IMR-90 (cell line): ENCODE measurements at regions of chr10 and their contacts with region 1.

Region 1: DNA sequence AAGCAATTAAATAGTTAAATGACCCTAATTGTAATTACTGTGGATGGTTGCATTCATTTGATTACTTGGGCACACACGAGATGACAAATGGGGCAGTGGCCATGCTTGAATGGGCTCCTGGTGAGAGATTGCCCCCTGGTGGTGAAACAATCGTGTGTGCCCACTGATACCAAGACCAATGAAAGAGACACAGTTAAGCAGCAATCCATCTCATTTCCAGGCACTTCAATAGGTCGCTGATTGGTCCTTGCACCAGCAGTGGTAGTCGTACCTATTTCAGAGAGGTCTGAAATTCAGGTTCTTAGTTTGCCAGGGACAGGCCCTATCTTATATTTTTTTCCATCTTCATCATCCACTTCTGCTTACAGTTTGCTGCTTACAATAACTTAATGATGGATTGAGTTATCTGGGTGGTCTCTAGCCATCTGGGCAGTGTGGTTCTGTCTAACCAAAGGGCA is 8.3 kb downstream of the PCBD1 start:
- DNase-seq: peak; percentile 79
- ATAC-seq: peak; percentile 94
- H3K4me3 ChIP-seq: no peak overlapping the region
- H3K27ac ChIP-seq: no peak overlapping the region
- H3K4me1 ChIP-seq: no peaks in the 10 kb centered on the region
- H3K27me3 ChIP-seq: no peaks in the 10 kb centered on the region
- CTCF ChIP-seq: peak; percentile 93
- POLR2A ChIP-seq: 0 out of 2 replicates have a peak, but pooled peaks have one; percentile 35
- RAD21 ChIP-seq: peak; percentile 97

Region 2: GRCh38 chr10:70461215-70461986 is 418.7 kb before region 1 on chr10:
- CTCF ChIA-PET with region 1: no interaction called
- POLR2A ChIA-PET with region 1: no interaction called
- dilution Hi-C with region 1: no loop called
- in situ Hi-C with region 1: no loop called
- intact Hi-C with region 1: loop called (anchors 5 kb)
- DNase-seq: peak; percentile 50
- ATAC-seq: peak; percentile 82
- H3K4me3 ChIP-seq: no peak overlapping the region
- H3K27ac ChIP-seq: no peak overlapping the region
- H3K4me1 ChIP-seq: peaks cover 2% of the 10 kb centered on the region; the same call in 1 of the 2 replicates
- H3K27me3 ChIP-seq: peaks cover 24% of the 10 kb centered on the region
- CTCF ChIP-seq: peak; percentile 87
- POLR2A ChIP-seq: no peak
- RAD21 ChIP-seq: peak; percentile 91

Region 3: DNA sequence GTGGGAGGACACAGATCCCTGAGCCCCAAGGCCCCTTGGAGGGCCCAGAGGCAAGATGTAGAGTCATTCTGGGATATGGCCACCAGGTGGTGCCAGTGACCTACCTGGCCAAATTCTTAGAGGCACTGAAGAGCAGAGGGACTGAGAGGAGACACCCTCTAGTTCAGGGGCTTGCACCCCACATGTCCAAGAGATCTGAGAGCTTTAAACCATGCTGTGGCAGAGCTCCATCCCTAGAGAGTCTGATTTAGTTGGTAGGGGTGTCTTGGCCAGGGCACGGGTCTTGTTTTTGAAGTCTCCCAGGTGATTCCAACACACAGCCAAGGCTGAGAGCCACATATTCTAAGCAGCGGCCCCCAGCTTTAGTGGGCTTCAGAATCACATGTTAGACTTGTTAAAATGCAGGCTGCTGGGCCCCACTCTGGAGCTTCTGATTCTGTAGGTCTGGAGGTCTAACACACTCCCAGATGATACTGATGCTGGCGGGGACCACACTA is 330.1 kb before region 1 on chr10:
- CTCF ChIA-PET with region 1: interaction called, 3 read pairs
- POLR2A ChIA-PET with region 1: no interaction called
- dilution Hi-C with region 1: no loop called
- in situ Hi-C with region 1: loop called (anchors 5 kb)
- intact Hi-C with region 1: loop called (anchors 1 kb)
- DNase-seq: peak; percentile 48
- ATAC-seq: peak; percentile 73
- H3K4me3 ChIP-seq: no peak overlapping the region
- H3K27ac ChIP-seq: no peak overlapping the region
- H3K4me1 ChIP-seq: peaks cover 9% of the 10 kb centered on the region
- H3K27me3 ChIP-seq: peaks cover 3% of the 10 kb centered on the region; the same call in 1 of the 2 replicates
- CTCF ChIP-seq: peak; percentile 80
- POLR2A ChIP-seq: no peak
- RAD21 ChIP-seq: peak; percentile 92

Region 4: GRCh38 chr10:70672165-70673042 is 207.7 kb before region 1 on chr10 and contains the start of gene ADAMTS14:
- CTCF ChIA-PET with region 1: no interaction called
- POLR2A ChIA-PET with region 1: no interaction called
- dilution Hi-C with region 1: no loop called
- in situ Hi-C with region 1: no loop called
- intact Hi-C with region 1: loop called (anchors 1 kb)
- DNase-seq: no peak
- ATAC-seq: peak; percentile 68
- H3K4me3 ChIP-seq: peak within 1 kb of the TSS; percentile 57
- H3K27ac ChIP-seq: no peak within 1 kb of the TSS; the same call in 1 of the 2 replicates
- H3K4me1 ChIP-seq: peaks cover 7% of the 10 kb centered on the region; the same call in 1 of the 2 replicates
- H3K27me3 ChIP-seq: peaks cover 8% of the 10 kb centered on the region
- CTCF ChIP-seq: no peak
- POLR2A ChIP-seq: peak; percentile 47; the same call in 1 of the 2 replicates
- RAD21 ChIP-seq: no peak
- total RNA-seq, gene ADAMTS14: under 0.01 TPM in 2 replicates

Region 5: DNA sequence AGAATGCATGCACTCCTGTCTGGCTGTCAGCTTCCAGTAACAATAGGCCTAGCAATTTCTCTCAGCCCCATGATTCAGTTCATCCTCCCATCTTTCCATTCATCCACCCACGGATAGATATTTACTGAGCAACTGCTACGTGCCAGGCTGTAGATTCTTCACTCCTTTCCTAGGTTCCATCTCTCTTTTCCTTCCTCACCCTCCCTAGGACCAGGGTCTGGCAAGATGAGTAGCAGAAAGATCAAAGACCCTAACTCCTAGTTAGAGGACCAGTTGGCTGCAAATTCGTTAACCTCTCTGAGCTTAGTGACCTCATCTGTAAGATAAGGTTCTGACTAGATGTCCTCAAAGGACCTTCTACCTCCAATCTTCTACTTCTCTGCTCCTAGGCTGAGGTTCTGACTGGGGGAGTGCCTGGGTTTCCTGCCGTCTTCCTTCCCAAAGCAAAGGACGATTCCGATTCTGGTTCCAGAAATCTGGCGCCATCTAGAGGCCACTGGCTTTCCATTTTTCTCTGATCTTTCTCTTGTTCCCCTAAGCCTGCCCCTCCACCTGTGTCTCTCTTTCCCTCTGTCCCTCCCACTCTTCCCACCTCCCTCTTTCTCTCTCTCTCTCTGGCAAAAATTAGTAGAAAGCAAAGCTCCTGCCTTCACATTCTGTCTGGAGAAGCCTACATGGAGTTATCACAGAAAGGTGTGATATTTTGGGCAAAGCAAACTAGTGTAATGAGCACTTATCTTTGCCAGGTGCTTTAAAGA is 121.2 kb before region 1 on chr10:
- CTCF ChIA-PET with region 1: no interaction called
- POLR2A ChIA-PET with region 1: no interaction called
- dilution Hi-C with region 1: no loop called
- in situ Hi-C with region 1: no loop called
- intact Hi-C with region 1: loop called (anchors 2 kb)
- DNase-seq: peak; percentile 66
- ATAC-seq: peak; percentile 81
- H3K4me3 ChIP-seq: no peak overlapping the region
- H3K27ac ChIP-seq: no peak overlapping the region
- H3K4me1 ChIP-seq: no peaks in the 10 kb centered on the region
- H3K27me3 ChIP-seq: peaks cover 33% of the 10 kb centered on the region
- CTCF ChIP-seq: peak; percentile 87
- POLR2A ChIP-seq: no peak
- RAD21 ChIP-seq: peak; percentile 90

Region 6: GRCh38 chr10:70815504-70816219 is 64.4 kb before region 1 on chr10 and contains the start of gene SGPL1:
- CTCF ChIA-PET with region 1: interaction called, 15 read pairs
- POLR2A ChIA-PET with region 1: no interaction called
- dilution Hi-C with region 1: no loop called
- in situ Hi-C with region 1: loop called (anchors 5 kb)
- intact Hi-C with region 1: loop called (anchors 1 kb)
- DNase-seq: peak; percentile 71
- ATAC-seq: peak; percentile 88
- H3K4me3 ChIP-seq: peak within 1 kb of the TSS; percentile 86
- H3K27ac ChIP-seq: peak within 1 kb of the TSS; percentile 87
- H3K4me1 ChIP-seq: no peaks in the 10 kb centered on the region
- H3K27me3 ChIP-seq: peaks cover 7% of the 10 kb centered on the region; the same call in 1 of the 2 replicates
- CTCF ChIP-seq: peak; percentile 99
- POLR2A ChIP-seq: peak; percentile 45; the same call in 1 of the 2 replicates
- RAD21 ChIP-seq: peak; percentile 97
- total RNA-seq, gene SGPL1: 26.7 and 27.5 TPM in 2 replicates

Region 7: GRCh38 chr10:71244431-71245419 is 364.6 kb after region 1 on chr10:
- CTCF ChIA-PET with region 1: no interaction called
- POLR2A ChIA-PET with region 1: no interaction called
- dilution Hi-C with region 1: no loop called
- in situ Hi-C with region 1: no loop called
- intact Hi-C with region 1: no loop called
- DNase-seq: peak; percentile 93
- ATAC-seq: peak; percentile 82
- H3K4me3 ChIP-seq: peak overlapping the region; percentile 17
- H3K27ac ChIP-seq: peak overlapping the region; percentile 92; the same call in 1 of the 2 replicates
- H3K4me1 ChIP-seq: peaks cover 34% of the 10 kb centered on the region
- H3K27me3 ChIP-seq: no peaks in the 10 kb centered on the region
- CTCF ChIP-seq: no peak
- POLR2A ChIP-seq: no peak
- RAD21 ChIP-seq: no peak; the same call in 1 of the 2 replicates